H1 (cell line): ENCODE measurements at regions of chr6 and their contacts with region 1.

Region 1: GRCh38 chr6:12483712-12484111 is 193.6 kb downstream of the EDN1 start:
- DNase-seq: no peak
- H3K4me3 ChIP-seq: no peak overlapping the region
- H3K27ac ChIP-seq: no peak overlapping the region
- H3K4me1 ChIP-seq: no peaks in the 10 kb centered on the region
- H3K27me3 ChIP-seq: no peaks in the 10 kb centered on the region
- CTCF ChIP-seq: no peak
- EP300 ChIP-seq: no peak
- POLR2A ChIP-seq: no peak
- RAD21 ChIP-seq: no peak

Region 2: DNA sequence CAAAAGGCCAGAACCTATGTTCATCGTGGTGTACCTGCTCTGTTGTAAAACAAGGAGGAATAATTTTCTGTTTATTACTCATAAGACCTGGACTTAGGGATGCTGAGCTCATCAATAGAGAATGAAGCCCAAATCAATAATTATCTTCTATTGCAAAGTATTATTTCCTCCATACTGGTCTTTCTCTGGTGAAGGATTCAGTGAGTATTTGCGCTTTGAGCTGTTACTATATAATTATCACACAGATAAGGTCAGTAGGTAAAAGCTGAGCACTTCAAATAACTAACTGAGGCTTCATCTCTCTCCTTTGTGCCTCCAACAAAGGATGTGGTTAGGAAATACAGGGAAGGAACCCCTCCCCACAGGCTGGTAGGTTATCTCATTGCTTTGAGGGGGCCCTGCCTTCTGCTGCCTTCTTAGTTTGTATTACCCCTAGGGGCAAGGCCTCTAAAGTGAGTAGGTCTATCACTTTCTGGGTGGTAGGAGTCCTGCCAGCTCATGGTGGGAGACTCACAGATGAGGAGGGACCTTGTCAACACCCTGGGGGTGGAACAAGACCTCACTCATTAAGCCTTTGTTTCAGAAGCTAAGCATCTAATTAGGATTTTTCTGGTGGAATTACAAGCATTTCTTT is 159.1 kb before region 1 on chr6:
- CTCF ChIA-PET with region 1: interaction called, 11 read pairs
- POLR2A ChIA-PET with region 1: no interaction called
- DNase-seq: peak; percentile 51 to 79
- H3K4me3 ChIP-seq: no peak overlapping the region; a peak in 1 of 8 replicates
- H3K27ac ChIP-seq: no peak overlapping the region
- H3K4me1 ChIP-seq: peaks cover 1 to 26% (median 18%) of the 10 kb centered on the region in 4 experiments; a peak in 6 of 7 replicates
- H3K27me3 ChIP-seq: peaks cover 0 to 3% (median 0%) of the 10 kb centered on the region in 4 experiments; a peak in 1 of 7 replicates
- CTCF ChIP-seq: no peak
- EP300 ChIP-seq: no peak
- POLR2A ChIP-seq: no peak
- RAD21 ChIP-seq: no peak

Region 3: GRCh38 chr6:12458558-12458957 is 25.2 kb before region 1 on chr6:
- CTCF ChIA-PET with region 1: interaction called, 13 read pairs
- POLR2A ChIA-PET with region 1: no interaction called
- DNase-seq: no peak
- H3K4me3 ChIP-seq: no peak overlapping the region
- H3K27ac ChIP-seq: no peak overlapping the region
- H3K4me1 ChIP-seq: peaks cover 0 to 17% (median 5%) of the 10 kb centered on the region in 4 experiments; a peak in 4 of 7 replicates
- H3K27me3 ChIP-seq: peaks cover 14 to 30% (median 18%) of the 10 kb centered on the region in 4 experiments; a peak in 5 of 7 replicates
- CTCF ChIP-seq: no peak
- EP300 ChIP-seq: no peak
- POLR2A ChIP-seq: no peak
- RAD21 ChIP-seq: no peak

Region 4: DNA sequence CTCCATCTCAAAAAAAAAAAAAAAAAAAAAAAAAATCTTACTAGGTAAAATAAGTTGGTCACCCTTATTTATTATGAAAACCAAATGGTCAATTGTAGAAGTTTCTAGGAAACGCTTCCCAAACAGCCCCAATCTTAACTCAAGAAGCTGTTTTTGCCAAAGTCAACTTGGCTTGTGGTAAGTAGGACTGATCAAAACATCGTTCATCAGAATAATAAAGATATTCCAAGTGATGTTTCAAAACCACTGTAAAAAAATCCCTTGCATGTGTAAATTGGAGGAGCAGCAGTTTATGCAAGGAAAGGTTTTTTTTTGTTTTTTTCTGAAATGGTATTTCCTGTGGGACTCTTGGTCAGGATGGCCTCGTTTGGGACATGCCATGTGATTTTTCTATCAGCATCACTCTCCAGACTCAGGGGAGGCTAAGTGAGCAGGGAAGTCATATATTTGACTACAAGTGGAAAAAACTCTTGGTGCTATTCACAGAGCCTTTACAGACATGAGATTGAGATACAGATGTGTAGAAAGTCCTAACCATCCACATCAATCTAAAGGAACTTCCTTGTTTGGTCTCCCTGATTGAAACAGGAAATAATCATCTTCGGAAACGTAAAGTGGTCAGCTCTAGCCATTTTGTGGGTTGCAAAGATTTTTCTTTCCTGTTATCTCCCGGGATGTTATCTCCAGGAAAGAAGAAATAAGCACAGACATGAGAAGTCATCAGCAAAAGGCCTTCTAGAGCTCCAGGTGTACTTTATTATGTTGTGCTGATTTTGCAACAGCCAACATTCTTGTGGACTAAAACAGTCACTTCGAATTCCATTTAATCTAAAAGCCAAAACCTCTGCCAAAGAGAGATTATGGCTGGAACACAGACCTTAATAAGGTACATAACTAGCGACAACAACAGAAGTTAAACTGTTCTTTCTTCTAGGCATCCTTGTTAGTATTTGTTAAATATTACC is 15.7 kb before region 1 on chr6:
- CTCF ChIA-PET with region 1: interaction called, 13 read pairs
- POLR2A ChIA-PET with region 1: no interaction called
- DNase-seq: no peak
- H3K4me3 ChIP-seq: no peak overlapping the region
- H3K27ac ChIP-seq: no peak overlapping the region
- H3K4me1 ChIP-seq: peaks cover 0 to 3% (median 2%) of the 10 kb centered on the region in 4 experiments; a peak in 2 of 7 replicates
- H3K27me3 ChIP-seq: no peaks in the 10 kb centered on the region
- CTCF ChIP-seq: no peak
- EP300 ChIP-seq: no peak
- POLR2A ChIP-seq: no peak
- RAD21 ChIP-seq: no peak

Region 5: GRCh38 chr6:12504319-12504966 is 20.7 kb after region 1 on chr6:
- CTCF ChIA-PET with region 1: interaction called, 35 read pairs
- POLR2A ChIA-PET with region 1: no interaction called
- DNase-seq: no peak
- H3K4me3 ChIP-seq: no peak overlapping the region
- H3K27ac ChIP-seq: no peak overlapping the region
- H3K4me1 ChIP-seq: no peaks in the 10 kb centered on the region
- H3K27me3 ChIP-seq: no peaks in the 10 kb centered on the region
- CTCF ChIP-seq: peak; percentile 30 to 84 (median 70)
- EP300 ChIP-seq: no peak
- POLR2A ChIP-seq: no peak
- RAD21 ChIP-seq: peak; percentile 74 to 80